ENCODE measurements at regions of chr18 and their contacts with region 1.

Region 1: DNA sequence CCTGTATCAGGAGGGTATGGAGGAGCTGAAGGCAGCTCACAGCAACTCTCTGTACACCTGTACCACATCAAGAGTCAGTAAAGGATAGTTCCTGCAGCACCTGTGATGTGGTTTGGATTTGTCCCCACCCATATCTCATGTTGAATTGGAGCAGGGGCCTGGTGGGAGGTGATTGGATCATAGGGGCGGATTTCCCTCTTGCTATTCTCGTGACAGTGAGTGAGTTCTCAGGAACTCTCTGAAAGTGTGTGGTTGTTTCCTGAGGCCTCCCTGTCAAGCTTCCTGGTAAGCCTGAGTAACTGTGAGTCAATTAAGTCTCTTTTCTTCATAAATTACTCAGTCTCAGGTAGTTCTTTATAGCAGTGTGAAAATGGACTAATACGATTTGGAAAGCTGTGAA is 28.9 kb downstream of the OSBPL1A start:
- DNase-seq: peak; percentile 40
- ATAC-seq: peak; percentile 73
- H3K4me3 Mint-ChIP-seq: no peak overlapping the region
- H3K27ac Mint-ChIP-seq: peak overlapping the region; percentile 1
- H3K4me1 Mint-ChIP-seq: peaks cover 21% of the 10 kb centered on the region
- H3K27me3 Mint-ChIP-seq: no peaks in the 10 kb centered on the region
- CTCF ChIP-seq: no peak

Region 2: DNA sequence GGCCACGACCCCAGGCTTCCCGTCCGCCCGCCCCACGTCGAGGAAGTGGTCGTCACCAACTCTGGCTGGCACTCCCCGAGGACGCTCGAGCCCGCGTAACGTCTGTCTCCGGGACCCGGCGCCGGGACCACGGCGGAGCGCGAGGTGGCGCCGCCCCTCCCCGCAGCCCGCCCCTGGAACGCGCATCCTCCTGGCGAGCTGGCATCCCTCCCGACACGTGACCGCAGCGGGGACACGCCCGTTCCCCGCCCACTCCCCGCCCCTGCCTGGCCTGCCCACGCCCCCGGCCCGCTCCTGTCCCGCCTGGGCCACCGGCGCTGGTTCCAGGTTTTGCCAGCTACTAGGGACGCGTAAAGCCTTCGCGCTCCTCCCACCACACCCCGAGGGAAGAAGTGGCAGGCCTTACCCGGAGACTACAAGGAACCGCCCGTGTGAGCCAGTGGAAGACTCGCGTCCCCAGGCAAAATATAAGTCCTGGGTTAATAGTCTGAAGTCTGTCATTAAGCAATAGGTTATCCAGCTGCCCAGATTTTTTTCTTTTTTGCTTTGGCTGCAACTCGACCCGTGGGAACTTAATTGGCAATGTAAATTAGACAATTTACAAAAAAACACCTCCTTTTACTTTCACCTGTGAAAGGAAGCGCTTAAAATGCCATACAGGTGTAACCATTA is 29.1 kb after region 1 on chr18 and contains the start of gene OSBPL1A:
- CTCF ChIA-PET with region 1: interaction called, 4 read pairs
- POLR2A ChIA-PET with region 1: interaction called, 10 read pairs
- intact Hi-C with region 1: no loop called
- DNase-seq: peak; percentile 76
- ATAC-seq: peak; percentile 84
- H3K4me3 Mint-ChIP-seq: peak within 1 kb of the TSS; percentile 68
- H3K27ac Mint-ChIP-seq: no peak within 1 kb of the TSS
- H3K4me1 Mint-ChIP-seq: peaks cover 15% of the 10 kb centered on the region
- H3K27me3 Mint-ChIP-seq: peaks cover 24% of the 10 kb centered on the region
- CTCF ChIP-seq: no peak
- total RNA-seq, gene OSBPL1A: 2.7 to 3.1 TPM

Region 3: DNA sequence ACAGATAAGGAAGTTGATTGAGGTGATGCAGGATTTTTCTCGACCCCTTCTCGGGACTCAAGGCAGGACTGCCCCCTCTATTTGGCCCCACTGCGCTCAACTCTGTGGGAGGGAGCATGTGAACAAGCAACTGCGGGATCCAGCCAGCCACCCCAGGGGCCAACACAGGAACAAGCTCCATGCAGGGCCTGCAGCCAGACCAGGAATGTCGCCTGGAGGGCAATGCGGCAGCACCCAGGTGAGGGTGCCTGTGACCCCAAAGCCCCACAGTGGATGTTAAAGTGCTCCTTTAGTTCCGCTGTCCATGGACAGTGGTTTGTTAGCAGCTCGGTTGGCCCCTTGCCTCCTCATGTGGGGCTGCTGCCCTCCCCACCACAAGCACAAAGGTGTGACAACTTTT is 148.8 kb after region 1 on chr18:
- CTCF ChIA-PET with region 1: no interaction called
- POLR2A ChIA-PET with region 1: no interaction called
- intact Hi-C with region 1: no loop called
- DNase-seq: no peak
- ATAC-seq: no peak
- H3K4me3 Mint-ChIP-seq: no peak overlapping the region
- H3K27ac Mint-ChIP-seq: no peak overlapping the region
- H3K4me1 Mint-ChIP-seq: no peaks in the 10 kb centered on the region
- H3K27me3 Mint-ChIP-seq: no peaks in the 10 kb centered on the region
- CTCF ChIP-seq: no peak

Measured in activated CD8-positive, alpha-beta T cell treated with anti-CD3 and anti-CD28 coated beads for 36 hours (primary cell).